PC-3 (cell line): ENCODE measurements at regions of chr1 and their contacts with region 1.

Region 1: GRCh38 chr1:187588917-187589316 is 760.2 kb downstream of the PLA2G4A start:
- DNase-seq: peak; percentile 39
- ATAC-seq: peak; percentile 48; the same call in 1 of the 2 replicates
- H3K4me3 ChIP-seq: no peak overlapping the region
- H3K27ac ChIP-seq: no peak overlapping the region
- H3K4me1 ChIP-seq: peaks cover 4% of the 10 kb centered on the region; the same call in 1 of the 2 replicates
- H3K27me3 ChIP-seq: no peaks in the 10 kb centered on the region
- CTCF ChIP-seq: no peak

Region 2: DNA sequence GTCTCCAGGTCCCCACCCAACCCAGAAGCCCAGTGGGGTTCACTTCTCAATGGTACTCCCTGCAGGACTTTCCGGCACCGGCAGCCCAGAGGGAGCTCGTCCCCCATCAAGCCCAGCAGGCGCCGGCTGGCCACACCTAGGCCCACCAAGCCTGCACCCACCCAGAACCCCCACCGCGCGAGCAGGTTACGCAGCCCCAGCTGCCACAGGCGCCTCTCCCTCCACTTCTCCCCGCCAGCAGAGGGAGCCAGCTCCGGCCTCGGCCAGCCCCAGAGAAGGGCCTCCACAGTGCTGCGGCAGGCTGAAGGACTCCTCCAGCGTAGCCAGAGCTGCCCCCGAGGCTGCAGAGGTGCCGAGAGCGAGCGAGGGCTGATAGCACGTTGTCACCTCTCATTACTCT is 37.9 kb before region 1 on chr1:
- CTCF ChIA-PET with region 1: no interaction called
- POLR2A ChIA-PET with region 1: no interaction called
- intact Hi-C with region 1: no loop called
- DNase-seq: no peak
- ATAC-seq: no peak
- H3K4me3 ChIP-seq: no peak overlapping the region
- H3K27ac ChIP-seq: no peak overlapping the region
- H3K4me1 ChIP-seq: no peaks in the 10 kb centered on the region
- H3K27me3 ChIP-seq: no peaks in the 10 kb centered on the region
- CTCF ChIP-seq: peak; percentile 19; the same call in 1 of the 2 replicates

Region 3: GRCh38 chr1:187999973-188000372 is 411.1 kb after region 1 on chr1:
- CTCF ChIA-PET with region 1: no interaction called
- POLR2A ChIA-PET with region 1: no interaction called
- intact Hi-C with region 1: loop called (anchors 10 kb)
- DNase-seq: peak; percentile 11
- ATAC-seq: peak; percentile 40; the same call in 1 of the 2 replicates
- H3K4me3 ChIP-seq: no peak overlapping the region
- H3K27ac ChIP-seq: no peak overlapping the region
- H3K4me1 ChIP-seq: no peaks in the 10 kb centered on the region
- H3K27me3 ChIP-seq: no peaks in the 10 kb centered on the region
- CTCF ChIP-seq: peak; percentile 39; the same call in 1 of the 2 replicates